ENCODE measurements at regions of chr16 and their contacts with region 1.

Region 1: GRCh38 chr16:56425439-56425832 is at the start of gene AMFR:
- DNase-seq: peak; percentile 79
- H3K4me3 ChIP-seq: peak within 1 kb of the TSS; percentile 83 to 98 (median 88)
- H3K27ac ChIP-seq: peak within 1 kb of the TSS; percentile 89 to 97 (median 92)
- H3K4me1 ChIP-seq: peaks cover 0 to 45% (median 30%) of the 10 kb centered on the region in 4 donors
- H3K27me3 ChIP-seq: no peaks in the 10 kb centered on the region
- CTCF ChIP-seq: peak in 2 of 4 experiments; percentile 25 to 48
- EP300 ChIP-seq: no peak
- POLR2A ChIP-seq: no peak
- total RNA-seq, gene AMFR: 111 to 201 (median 149) TPM

Region 2: DNA sequence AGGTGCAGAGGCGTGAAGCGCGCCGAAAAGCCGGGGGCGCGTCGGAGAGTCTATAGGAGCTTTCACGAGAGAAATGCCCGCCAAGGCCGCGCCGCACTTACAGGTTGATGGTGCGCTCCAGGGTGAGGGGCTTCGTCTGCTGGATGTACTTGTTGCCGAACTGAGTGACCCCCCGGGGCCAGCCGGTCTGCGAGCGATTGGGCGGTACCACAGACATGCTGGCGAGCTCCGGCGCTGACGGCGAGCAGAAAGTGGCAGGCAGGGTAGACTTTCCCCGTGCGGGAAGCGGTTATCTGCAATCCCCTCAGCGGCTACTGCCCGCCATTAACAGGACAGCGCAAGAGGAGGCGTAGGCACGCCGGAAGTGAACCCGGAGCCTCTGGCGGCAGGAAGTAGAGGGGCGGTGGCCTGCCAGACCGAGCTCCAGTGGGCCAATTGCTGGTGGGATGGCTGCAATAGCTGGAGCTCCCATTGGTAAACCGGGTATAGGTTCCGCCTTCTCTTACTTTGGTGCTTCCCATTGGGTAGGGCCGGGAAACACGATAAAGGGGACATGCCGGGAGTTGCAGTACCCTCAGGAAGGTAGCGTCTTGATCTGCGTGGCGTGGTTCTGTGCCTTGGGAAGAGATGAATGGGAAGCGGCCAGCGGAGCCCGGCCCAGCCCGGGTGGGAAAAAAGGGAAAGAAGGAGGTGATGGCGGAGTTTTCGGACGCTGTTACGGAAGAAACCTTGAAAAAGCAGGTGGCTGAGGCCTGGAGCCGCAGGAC is 25.7 kb after region 1 on chr16 and contains the starts of genes NUDT21 and OGFOD1:
- intact Hi-C with region 1: loop called (anchors 2 kb)
- DNase-seq: peak; percentile 98
- H3K4me3 ChIP-seq: peak within 1 kb of the TSS; percentile 70 to 98 (median 88)
- H3K27ac ChIP-seq: peak within 1 kb of the TSS; percentile 79 to 88 (median 84)
- H3K4me1 ChIP-seq: peaks cover 0 to 43% (median 38%) of the 10 kb centered on the region in 4 donors
- H3K27me3 ChIP-seq: no peaks in the 10 kb centered on the region
- CTCF ChIP-seq: peak in 1 of 4 experiments; percentile 10
- EP300 ChIP-seq: no peak
- POLR2A ChIP-seq: peak; percentile 27 to 51
- total RNA-seq, gene NUDT21: 40.4 to 51.7 (median 45.5) TPM
- total RNA-seq, gene OGFOD1: 13.6 to 34.1 (median 19.7) TPM

Region 3: DNA sequence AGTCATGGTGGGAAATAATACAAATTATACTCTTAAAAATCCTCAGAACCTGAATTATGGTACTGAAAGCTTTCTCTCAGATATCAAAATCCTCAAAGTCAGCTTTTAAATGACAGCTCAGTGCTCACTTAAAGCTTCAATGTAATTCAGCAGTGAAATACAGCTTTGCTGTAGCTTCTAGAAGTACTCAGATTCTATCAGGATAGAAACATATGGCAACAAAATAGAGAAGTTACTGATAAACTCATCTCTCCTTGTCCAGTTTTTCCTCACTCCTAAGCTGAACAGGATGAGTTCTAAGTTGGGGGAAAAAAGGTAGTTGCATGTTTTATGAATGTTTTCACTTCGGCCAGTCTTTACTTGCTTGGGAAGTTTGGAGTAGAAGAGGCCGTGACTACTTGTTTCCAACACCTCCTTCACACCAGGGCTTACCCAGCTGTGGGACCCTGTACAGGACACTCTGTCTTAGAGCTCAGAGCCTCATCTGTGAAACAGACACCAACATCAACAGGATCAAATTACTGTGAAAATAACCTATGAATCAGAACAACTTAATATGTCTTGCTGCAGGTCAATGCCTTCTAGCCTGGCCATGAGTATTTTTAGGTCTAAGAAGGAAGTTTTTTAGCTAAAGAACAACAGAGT is 56.2 kb after region 1 on chr16:
- intact Hi-C with region 1: no loop called
- DNase-seq: no peak
- H3K4me3 ChIP-seq: no peak overlapping the region
- H3K27ac ChIP-seq: no peak overlapping the region
- H3K4me1 ChIP-seq: no peaks in the 10 kb centered on the region
- H3K27me3 ChIP-seq: no peaks in the 10 kb centered on the region
- CTCF ChIP-seq: no peak
- EP300 ChIP-seq: no peak
- POLR2A ChIP-seq: no peak